A673 (cell line): ENCODE measurements at regions of chr19 and their contacts with region 1.

Region 1: DNA sequence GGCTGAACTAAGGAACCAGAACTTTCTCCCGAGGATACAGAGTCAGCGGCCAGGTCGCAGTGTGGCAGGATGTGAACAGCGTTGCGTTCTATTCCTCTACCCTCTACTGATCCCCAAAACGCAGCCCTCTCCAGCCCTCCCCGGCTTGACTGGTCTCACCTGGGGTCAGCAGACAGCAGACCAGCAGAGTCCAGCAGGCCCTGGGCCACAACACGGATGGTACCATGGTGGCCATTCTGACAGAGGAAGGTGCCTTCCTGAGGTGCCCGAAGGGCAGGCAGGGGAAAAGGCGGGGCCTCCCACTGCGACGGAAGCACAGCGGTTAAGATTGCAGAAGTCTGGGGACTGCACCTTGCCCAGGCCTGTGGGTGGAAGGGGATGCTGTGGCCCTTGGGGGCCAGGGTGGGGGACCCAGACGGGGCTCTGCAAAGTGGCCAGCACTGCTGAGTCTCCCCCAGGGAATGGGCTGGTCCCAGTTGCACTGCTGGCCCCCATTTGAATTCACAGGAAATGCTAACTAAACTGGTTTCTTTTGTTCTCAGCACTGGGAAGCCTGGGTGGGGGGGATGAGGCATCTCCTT is at the start of gene ICAM3:
- DNase-seq: no peak
- H3K4me3 ChIP-seq: no peak within 1 kb of the TSS
- H3K27ac ChIP-seq: no peak within 1 kb of the TSS
- H3K4me1 ChIP-seq: peaks cover 17% of the 10 kb centered on the region
- H3K27me3 ChIP-seq: no peaks in the 10 kb centered on the region
- CTCF ChIP-seq: no peak
- total RNA-seq, gene ICAM3: 2.6 and 3.2 TPM in 2 replicates

Region 2: GRCh38 chr19:9986787-9987281 is 352.6 kb before region 1 on chr19:
- CTCF ChIA-PET with region 1: no interaction called
- POLR2A ChIA-PET with region 1: interaction called, 10 read pairs
- intact Hi-C with region 1: no loop called
- DNase-seq: no peak
- H3K4me3 ChIP-seq: no peak overlapping the region
- H3K27ac ChIP-seq: no peak overlapping the region
- H3K4me1 ChIP-seq: no peaks in the 10 kb centered on the region
- H3K27me3 ChIP-seq: no peaks in the 10 kb centered on the region
- CTCF ChIP-seq: no peak

Region 3: DNA sequence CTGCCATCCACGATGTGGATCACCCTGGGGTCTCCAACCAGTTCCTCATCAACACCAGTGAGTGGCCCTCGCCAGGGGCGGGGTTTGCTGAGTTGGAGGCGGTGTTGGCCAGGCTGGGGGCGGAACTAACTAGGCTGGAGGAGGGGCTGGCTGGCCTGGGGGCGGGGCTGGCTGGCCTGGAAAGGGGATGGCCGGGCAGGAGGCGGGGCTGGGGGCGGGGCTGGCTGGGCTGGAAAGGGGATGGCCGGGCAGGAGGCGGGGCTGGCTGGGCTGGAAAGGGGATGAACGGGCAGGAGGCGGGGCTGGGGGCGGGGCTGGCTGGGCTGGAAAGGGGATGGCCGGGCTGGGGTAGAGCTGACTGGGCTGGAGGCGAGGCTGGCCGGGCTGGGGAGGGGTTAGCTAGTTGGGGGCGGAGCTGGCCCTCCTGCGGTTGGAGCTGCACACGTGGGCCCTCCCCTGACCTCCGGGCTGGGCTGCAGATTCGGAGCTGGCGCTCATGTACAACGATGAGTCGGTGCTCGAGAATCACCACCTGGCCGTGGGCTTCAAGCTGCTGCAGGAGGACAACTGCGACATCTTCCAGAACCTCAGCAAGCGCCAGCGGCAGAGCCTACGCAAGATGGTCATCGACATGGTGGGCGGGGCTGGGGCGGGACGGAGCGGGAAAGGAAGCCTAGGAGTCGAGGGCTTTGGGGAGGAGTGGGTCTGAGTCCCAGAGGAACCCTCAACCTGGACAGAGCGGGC is 121.7 kb after region 1 on chr19:
- CTCF ChIA-PET with region 1: no interaction called
- POLR2A ChIA-PET with region 1: no interaction called
- intact Hi-C with region 1: no loop called
- DNase-seq: peak; percentile 65
- H3K4me3 ChIP-seq: no peak overlapping the region
- H3K27ac ChIP-seq: no peak overlapping the region
- H3K4me1 ChIP-seq: no peaks in the 10 kb centered on the region
- H3K27me3 ChIP-seq: no peaks in the 10 kb centered on the region
- CTCF ChIP-seq: no peak

Region 4: GRCh38 chr19:10724551-10725071 is 385.1 kb after region 1 on chr19:
- CTCF ChIA-PET with region 1: no interaction called
- POLR2A ChIA-PET with region 1: no interaction called
- intact Hi-C with region 1: no loop called
- DNase-seq: peak; percentile 69
- H3K4me3 ChIP-seq: no peak overlapping the region
- H3K27ac ChIP-seq: peak overlapping the region; percentile 54
- H3K4me1 ChIP-seq: peaks cover 14% of the 10 kb centered on the region
- H3K27me3 ChIP-seq: no peaks in the 10 kb centered on the region
- CTCF ChIP-seq: no peak

Region 5: GRCh38 chr19:10987621-10988297 is 648.3 kb after region 1 on chr19:
- CTCF ChIA-PET with region 1: no interaction called
- POLR2A ChIA-PET with region 1: no interaction called
- intact Hi-C with region 1: no loop called
- DNase-seq: no peak
- H3K4me3 ChIP-seq: no peak overlapping the region
- H3K27ac ChIP-seq: no peak overlapping the region
- H3K4me1 ChIP-seq: no peaks in the 10 kb centered on the region
- H3K27me3 ChIP-seq: no peaks in the 10 kb centered on the region
- CTCF ChIP-seq: no peak